Activated CD4-positive, alpha-beta T cell treated with anti-CD3 and anti-CD28 coated beads for 36 hours (primary cell): ENCODE measurements at regions of chr2 and their contacts with region 1.

Region 1: DNA sequence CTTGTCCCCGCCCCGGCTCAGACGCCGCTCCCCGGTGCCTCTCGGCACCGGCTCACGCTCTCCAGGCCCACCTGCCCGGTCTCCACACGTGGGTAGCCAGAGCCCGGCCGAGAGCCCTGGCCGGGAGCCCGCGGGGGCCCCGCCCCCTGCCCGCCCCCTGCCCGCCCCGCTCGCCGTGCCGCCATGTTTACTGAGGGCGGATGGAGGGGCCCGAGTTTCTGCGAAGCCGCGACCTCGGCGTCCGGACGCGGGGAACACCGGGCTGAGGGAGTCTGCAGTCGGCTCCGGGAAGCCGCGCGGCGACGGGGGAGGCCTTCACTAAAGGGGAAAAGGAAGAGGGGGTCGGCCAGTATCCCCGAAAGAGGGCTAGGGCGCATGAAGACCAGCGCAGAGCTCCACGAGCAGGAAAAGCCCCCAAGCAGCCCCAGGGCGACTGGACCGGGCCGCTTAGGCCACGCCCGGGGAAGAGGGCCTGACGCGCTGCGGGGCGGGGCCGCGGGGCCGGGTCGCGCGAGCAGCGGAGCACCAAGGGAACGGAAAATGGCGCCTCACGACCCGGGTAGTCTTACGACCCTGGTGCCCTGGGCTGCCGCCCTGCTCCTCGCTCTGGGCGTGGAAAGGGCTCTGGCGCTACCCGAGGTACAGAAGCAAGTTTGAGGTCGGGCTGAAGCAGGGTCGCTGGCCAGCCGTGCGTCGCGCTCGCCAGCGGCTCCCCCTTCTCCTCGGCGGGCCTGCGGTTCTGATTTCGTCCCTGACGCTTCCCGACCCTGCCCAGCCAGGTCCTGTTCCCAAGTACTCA is at the starts of genes ATRAID and SLC5A6:
- DNase-seq: peak; percentile 93
- ATAC-seq: peak; percentile 90
- H3K4me3 Mint-ChIP-seq: peak within 1 kb of the TSS; percentile 99
- H3K27ac Mint-ChIP-seq: peak within 1 kb of the TSS; percentile 100
- H3K4me1 Mint-ChIP-seq: peaks cover 34% of the 10 kb centered on the region
- H3K27me3 Mint-ChIP-seq: no peaks in the 10 kb centered on the region
- total RNA-seq, gene ATRAID: 69.9 to 83.4 TPM
- total RNA-seq, gene SLC5A6: 27.3 to 34.9 TPM

Region 2: GRCh38 chr2:26605195-26605998 is 606.6 kb before region 1 on chr2:
- CTCF ChIA-PET with region 1: no interaction called
- POLR2A ChIA-PET with region 1: no interaction called
- intact Hi-C with region 1: no loop called
- DNase-seq: peak; percentile 56
- ATAC-seq: peak; percentile 61
- H3K4me3 Mint-ChIP-seq: no peak overlapping the region
- H3K27ac Mint-ChIP-seq: no peak overlapping the region
- H3K4me1 Mint-ChIP-seq: peaks cover 18% of the 10 kb centered on the region
- H3K27me3 Mint-ChIP-seq: peaks cover 11% of the 10 kb centered on the region

Region 3: GRCh38 chr2:26785431-26786206 is 426.4 kb before region 1 on chr2 and contains the start of gene CENPA:
- CTCF ChIA-PET with region 1: no interaction called
- POLR2A ChIA-PET with region 1: no interaction called
- intact Hi-C with region 1: loop called in 1 of 2 experiments (anchors 1 kb)
- DNase-seq: peak; percentile 97
- ATAC-seq: peak; percentile 100
- H3K4me3 Mint-ChIP-seq: peak within 1 kb of the TSS; percentile 80
- H3K27ac Mint-ChIP-seq: peak within 1 kb of the TSS; percentile 79
- H3K4me1 Mint-ChIP-seq: peaks cover 16% of the 10 kb centered on the region
- H3K27me3 Mint-ChIP-seq: peaks cover 7% of the 10 kb centered on the region
- total RNA-seq, gene CENPA: 37.0 to 38.0 TPM

Region 4: GRCh38 chr2:27058210-27058609 is 153.8 kb before region 1 on chr2:
- CTCF ChIA-PET with region 1: no interaction called
- POLR2A ChIA-PET with region 1: no interaction called
- intact Hi-C with region 1: loop called in 1 of 2 experiments (anchors 1 kb)
- DNase-seq: no peak
- ATAC-seq: no peak
- H3K4me3 Mint-ChIP-seq: no peak overlapping the region
- H3K27ac Mint-ChIP-seq: no peak overlapping the region
- H3K4me1 Mint-ChIP-seq: no peaks in the 10 kb centered on the region
- H3K27me3 Mint-ChIP-seq: no peaks in the 10 kb centered on the region

Region 5: DNA sequence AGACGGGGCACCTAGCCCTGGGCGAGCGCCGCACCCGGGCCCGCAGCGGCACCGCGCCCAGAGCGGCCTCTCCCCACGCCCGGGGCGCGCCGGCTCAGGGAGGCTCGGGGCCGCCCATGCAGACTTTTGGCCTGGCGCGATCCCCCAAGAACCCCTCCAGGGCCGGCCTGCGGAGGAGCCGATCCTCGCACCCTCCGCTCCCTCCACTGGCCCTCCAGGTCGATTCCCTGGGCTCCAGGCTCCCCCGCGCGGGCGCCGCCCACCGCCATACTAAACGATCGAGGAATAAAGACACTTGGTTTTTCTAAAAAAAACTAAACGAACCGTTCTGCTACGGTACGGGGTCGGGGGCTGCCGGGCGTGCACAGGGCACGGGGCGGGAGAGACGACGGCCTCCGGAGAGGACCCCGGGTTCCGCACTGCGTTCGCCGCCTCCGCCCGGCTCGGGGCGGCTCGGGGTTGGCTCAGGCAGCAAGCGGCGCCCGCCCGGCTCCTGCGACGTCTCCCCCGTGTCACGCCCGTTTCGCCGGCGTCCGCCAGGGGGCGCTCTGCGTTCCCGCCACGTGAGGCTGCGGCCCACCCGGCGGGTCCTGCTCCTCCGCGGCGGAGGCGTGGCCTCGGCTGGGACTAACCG is 125.8 kb before region 1 on chr2:
- CTCF ChIA-PET with region 1: interaction called, 3 read pairs
- POLR2A ChIA-PET with region 1: no interaction called
- intact Hi-C with region 1: loop called in 1 of 2 experiments (anchors 1 kb)
- DNase-seq: peak; percentile 98
- ATAC-seq: peak; percentile 89
- H3K4me3 Mint-ChIP-seq: peak overlapping the region; percentile 77
- H3K27ac Mint-ChIP-seq: peak overlapping the region; percentile 82
- H3K4me1 Mint-ChIP-seq: peaks cover 24% of the 10 kb centered on the region
- H3K27me3 Mint-ChIP-seq: no peaks in the 10 kb centered on the region

Region 6: GRCh38 chr2:27133905-27134780 is 77.9 kb before region 1 on chr2 and contains the start of gene PREB:
- CTCF ChIA-PET with region 1: no interaction called
- POLR2A ChIA-PET with region 1: no interaction called
- intact Hi-C with region 1: loop called (anchors 1 kb)
- DNase-seq: peak; percentile 99
- ATAC-seq: peak; percentile 97
- H3K4me3 Mint-ChIP-seq: peak within 1 kb of the TSS; percentile 81
- H3K27ac Mint-ChIP-seq: peak within 1 kb of the TSS; percentile 94
- H3K4me1 Mint-ChIP-seq: peaks cover 16% of the 10 kb centered on the region
- H3K27me3 Mint-ChIP-seq: no peaks in the 10 kb centered on the region
- total RNA-seq, gene PREB: 59.7 to 59.9 TPM

Region 7: DNA sequence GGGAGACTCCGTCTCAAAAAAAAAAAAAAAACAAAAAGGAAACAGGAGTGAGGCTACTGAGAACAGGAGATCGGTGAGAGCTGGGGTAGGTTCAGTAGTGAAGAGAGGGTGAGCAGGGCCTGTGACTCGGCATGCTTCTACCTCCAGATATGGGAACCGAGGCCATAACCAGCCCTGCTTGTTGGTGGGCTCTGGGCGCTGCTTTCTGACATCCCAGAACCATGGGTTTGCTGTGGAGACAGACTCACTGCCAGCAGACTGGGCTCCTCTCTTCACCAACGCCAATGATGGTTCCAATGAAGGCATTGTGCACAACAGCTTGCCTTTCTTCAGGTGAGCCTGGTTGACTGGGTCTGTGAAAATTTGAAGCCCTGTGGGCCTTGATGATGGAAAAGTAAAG is 11.4 kb after region 1 on chr2:
- CTCF ChIA-PET with region 1: no interaction called
- POLR2A ChIA-PET with region 1: no interaction called
- intact Hi-C with region 1: no loop called
- DNase-seq: no peak
- ATAC-seq: no peak
- H3K4me3 Mint-ChIP-seq: no peak overlapping the region
- H3K27ac Mint-ChIP-seq: no peak overlapping the region
- H3K4me1 Mint-ChIP-seq: peaks cover 14% of the 10 kb centered on the region
- H3K27me3 Mint-ChIP-seq: no peaks in the 10 kb centered on the region

Region 8: GRCh38 chr2:27322766-27323595 is 111.0 kb after region 1 on chr2 and contains the start of gene MPV17:
- CTCF ChIA-PET with region 1: no interaction called
- POLR2A ChIA-PET with region 1: no interaction called
- intact Hi-C with region 1: loop called in 1 of 2 experiments (anchors 1 kb)
- DNase-seq: peak; percentile 94
- ATAC-seq: peak; percentile 99
- H3K4me3 Mint-ChIP-seq: peak within 1 kb of the TSS; percentile 98
- H3K27ac Mint-ChIP-seq: peak within 1 kb of the TSS; percentile 98
- H3K4me1 Mint-ChIP-seq: peaks cover 17% of the 10 kb centered on the region
- H3K27me3 Mint-ChIP-seq: no peaks in the 10 kb centered on the region
- total RNA-seq, gene MPV17: 93.4 to 103 TPM

Region 9: DNA sequence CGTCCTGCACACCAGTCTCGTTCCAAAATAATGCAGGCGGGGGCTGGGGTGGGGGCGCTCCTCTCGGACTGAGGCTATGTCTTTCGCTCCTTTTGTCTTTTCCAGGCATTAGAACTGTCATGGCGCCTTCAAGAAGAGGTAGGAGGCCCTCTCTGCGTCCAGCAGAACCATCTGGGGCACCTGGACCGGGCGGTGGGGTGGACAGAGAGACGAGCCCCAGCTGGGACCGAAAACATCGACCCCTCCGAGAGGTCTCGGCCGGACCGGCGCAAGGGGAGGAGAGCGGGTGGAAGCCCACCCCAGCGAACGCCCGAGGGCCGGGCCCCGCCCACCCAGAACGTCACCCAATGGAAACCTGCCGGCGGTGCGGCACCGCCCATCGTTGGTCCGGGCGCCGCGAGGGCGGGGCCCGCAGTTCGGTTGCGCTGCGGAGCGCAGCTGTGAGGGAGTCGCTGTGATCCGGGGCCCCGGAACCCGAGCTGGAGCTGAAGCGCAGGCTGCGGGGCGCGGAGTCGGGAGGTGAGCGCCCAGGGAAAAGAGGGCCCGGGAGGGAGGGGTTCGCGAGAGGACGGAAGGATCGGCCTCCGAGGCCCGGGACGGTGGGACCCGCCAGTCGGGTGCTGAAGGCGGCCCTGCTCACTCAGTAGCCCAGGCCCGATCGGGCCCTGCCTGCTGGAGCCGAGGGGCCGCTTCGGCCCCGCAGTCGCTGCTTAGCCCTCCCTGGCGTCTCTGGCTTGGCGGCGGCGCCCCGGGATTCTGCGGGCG is 216.4 kb after region 1 on chr2 and contains the start of gene NRBP1:
- CTCF ChIA-PET with region 1: no interaction called
- POLR2A ChIA-PET with region 1: interaction called, 3 read pairs
- intact Hi-C with region 1: loop called in 1 of 2 experiments (anchors 1 kb)
- DNase-seq: peak; percentile 97
- ATAC-seq: peak; percentile 85
- H3K4me3 Mint-ChIP-seq: peak within 1 kb of the TSS; percentile 100
- H3K27ac Mint-ChIP-seq: peak within 1 kb of the TSS; percentile 98
- H3K4me1 Mint-ChIP-seq: peaks cover 37% of the 10 kb centered on the region
- H3K27me3 Mint-ChIP-seq: no peaks in the 10 kb centered on the region
- total RNA-seq, gene NRBP1: 74.3 to 74.4 TPM